AG04450 (cell line): ENCODE measurements at regions of chr2 and their contacts with region 1.

Region 1: GRCh38 chr2:117814417-117815264 is at the start of gene DDX18:
- DNase-seq: peak; percentile 95
- H3K4me3 ChIP-seq: peak within 1 kb of the TSS; percentile 94
- H3K27ac ChIP-seq: peak within 1 kb of the TSS; percentile 79
- H3K27me3 ChIP-seq: no peaks in the 10 kb centered on the region
- CTCF ChIP-seq: peak; percentile 100
- polyA plus RNA-seq, gene DDX18: 42.1 and 53.5 TPM in 2 replicates

Region 2: DNA sequence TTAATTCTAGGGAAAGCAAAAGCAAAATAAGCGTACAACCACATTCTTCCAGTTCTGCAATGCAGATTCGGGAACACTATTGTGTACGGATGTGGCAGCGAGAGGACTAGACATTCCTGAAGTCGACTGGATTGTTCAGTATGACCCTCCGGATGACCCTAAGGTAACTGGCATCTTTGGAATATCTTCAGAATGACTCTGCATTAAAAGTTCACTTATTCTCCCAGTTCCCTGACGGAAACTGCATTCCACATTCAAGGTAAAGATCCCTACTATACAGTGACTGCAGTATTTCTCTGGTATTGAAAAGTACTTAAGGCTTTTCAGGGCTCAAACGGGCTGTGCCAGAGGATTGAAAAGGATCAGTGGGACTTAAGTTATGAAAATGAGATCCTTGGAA is 10.8 kb after region 1 on chr2:
- CTCF ChIA-PET with region 1: interaction called, 36 read pairs
- POLR2A ChIA-PET with region 1: no interaction called
- DNase-seq: no peak
- H3K4me3 ChIP-seq: no peak overlapping the region
- H3K27ac ChIP-seq: no peak overlapping the region
- H3K27me3 ChIP-seq: no peaks in the 10 kb centered on the region
- CTCF ChIP-seq: no peak

Region 3: GRCh38 chr2:117856415-117857210 is 42.0 kb after region 1 on chr2:
- CTCF ChIA-PET with region 1: interaction called, 21 read pairs
- POLR2A ChIA-PET with region 1: no interaction called
- DNase-seq: peak; percentile 88
- H3K4me3 ChIP-seq: no peak overlapping the region
- H3K27ac ChIP-seq: peak overlapping the region; percentile 80
- H3K27me3 ChIP-seq: peaks cover 3% of the 10 kb centered on the region
- CTCF ChIP-seq: no peak

Region 4: GRCh38 chr2:117943013-117943672 is 128.5 kb after region 1 on chr2:
- CTCF ChIA-PET with region 1: interaction called, 18 read pairs
- POLR2A ChIA-PET with region 1: no interaction called
- DNase-seq: peak; percentile 45
- H3K4me3 ChIP-seq: no peak overlapping the region
- H3K27ac ChIP-seq: peak overlapping the region; percentile 39
- H3K27me3 ChIP-seq: no peaks in the 10 kb centered on the region
- CTCF ChIP-seq: no peak

Region 5: DNA sequence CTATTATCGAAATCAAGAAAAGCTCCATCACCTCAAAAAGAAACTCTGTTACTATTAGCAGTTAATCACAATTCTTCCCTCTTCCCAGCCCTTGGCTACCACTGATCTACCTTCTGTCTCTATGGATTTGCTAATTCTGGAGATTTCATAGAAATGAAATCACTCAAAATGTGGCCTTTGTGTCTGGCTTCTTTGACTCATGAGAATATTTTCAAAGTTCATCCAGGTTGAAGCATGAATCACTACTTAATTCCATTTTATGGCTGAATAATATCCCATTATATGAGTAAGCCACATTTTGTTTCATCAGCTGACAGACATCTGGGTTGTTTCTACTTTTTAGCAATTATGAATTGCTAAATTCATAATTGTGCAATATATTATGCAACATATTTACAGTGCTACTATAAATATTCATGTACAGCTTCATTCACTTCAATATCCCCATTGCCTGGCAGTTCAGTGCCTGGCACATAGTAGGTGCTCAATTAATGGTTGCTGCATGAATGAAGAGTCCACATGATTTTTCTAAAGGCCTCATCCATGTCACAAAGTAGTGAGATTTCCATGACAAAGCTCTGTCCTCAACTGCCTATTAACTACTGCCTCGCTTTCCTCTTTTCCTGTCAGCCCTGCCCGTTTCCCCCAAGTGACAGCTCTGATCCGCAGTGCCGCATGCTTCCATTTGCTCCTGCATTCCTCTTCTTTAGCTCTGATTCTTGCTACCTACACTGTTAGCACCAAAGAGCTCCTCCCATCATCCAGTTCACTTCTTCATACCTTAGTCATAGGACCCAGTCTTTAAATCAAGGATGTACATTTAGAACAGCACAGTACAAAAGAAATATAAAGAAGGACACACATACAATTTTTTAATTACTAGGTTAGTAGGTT is 166.4 kb after region 1 on chr2:
- CTCF ChIA-PET with region 1: interaction called, 17 read pairs
- POLR2A ChIA-PET with region 1: no interaction called
- DNase-seq: peak; percentile 49
- H3K4me3 ChIP-seq: no peak overlapping the region
- H3K27ac ChIP-seq: peak overlapping the region; percentile 87
- H3K27me3 ChIP-seq: no peaks in the 10 kb centered on the region
- CTCF ChIP-seq: no peak

Region 6: DNA sequence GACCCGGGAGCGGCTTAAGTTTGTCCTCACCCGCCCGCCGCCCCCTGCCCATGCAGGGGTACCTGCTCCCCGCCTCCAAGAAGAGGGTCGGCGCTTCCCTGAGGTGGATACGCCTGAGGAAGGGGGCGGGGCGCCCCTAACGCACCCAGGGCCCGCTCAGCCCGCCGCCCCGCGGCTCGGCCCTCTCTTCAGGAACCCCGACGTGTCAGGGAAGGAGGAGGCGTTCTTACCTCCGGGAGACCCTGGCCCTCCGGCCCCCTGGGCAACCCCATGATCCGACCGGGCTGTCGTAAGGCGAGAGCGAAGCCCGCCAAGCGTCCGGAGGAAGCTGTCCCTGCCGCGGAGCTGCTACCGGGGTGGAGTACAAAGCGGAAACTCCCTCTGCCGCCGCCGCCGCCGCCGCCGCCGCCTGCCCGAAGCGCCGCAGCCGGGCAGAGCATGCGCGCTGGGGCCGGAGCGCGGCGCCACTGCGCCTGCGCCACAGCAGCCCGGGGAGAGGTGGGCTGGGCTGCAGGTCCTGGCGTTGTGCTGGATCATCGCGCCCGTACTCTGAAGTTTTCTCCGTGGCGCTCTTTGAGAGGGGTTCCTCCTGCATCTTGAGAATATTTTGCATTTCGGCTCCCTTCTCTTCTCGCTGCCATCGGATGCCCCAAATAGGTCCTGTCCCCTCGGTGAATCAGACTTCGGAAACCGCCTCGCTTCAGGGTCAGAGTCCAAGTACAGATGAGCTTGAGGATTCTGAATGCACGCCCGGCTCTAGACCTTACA is 199.3 kb after region 1 on chr2 and contains the start of gene CCDC93:
- CTCF ChIA-PET with region 1: interaction called, 267 read pairs
- POLR2A ChIA-PET with region 1: no interaction called
- DNase-seq: peak; percentile 44
- H3K4me3 ChIP-seq: peak within 1 kb of the TSS; percentile 91
- H3K27ac ChIP-seq: peak within 1 kb of the TSS; percentile 39
- H3K27me3 ChIP-seq: no peaks in the 10 kb centered on the region
- CTCF ChIP-seq: no peak
- polyA plus RNA-seq, gene CCDC93: 17.7 and 19.9 TPM in 2 replicates